ENCODE measurements at regions of chr17 and their contacts with region 1.

Region 1: DNA sequence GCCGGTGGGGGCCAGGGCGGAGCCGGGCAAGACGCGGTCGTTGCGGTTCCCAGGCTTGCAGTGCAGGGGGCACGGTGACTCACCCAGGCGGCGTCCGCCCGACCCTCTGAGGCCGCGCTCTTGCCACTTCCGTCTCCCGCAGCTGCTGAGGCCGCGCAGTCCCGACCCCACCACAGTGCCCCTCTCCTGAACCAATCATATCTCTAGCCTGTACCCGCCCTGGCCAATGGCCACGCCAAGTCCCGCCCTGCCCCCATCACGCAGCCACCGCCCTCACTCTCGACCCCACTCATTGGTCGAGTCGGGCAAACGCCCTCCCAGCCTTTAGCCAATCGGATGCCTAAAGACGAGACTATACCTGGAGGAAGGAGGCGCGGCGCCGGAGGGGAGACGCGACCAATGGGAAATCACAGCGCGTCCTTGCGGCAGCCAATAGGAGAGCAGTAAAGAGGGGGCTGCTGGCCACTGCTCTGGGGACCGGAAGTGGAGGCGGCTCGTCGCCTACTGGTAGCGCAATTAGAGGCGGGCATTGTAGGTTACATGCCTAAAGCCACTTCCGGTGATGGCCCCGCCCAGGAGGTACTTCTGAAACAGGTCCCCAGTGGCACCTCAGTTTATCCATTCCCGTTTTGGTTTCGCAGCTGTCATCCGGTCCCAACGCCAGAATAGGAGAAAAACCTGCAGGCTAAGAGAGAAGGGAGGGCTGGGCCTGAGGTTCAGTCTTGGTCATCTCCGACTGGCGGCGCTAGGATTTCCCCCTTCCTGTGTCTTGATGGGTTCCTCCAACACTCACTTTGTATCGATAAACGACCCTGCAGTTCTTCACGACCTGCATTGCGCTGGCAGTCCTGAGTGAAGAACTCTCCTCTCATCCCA is 3.5 kb upstream of the MTMR4 start:
- DNase-seq: peak; percentile 100
- ATAC-seq: peak; percentile 88
- H3K4me3 ChIP-seq: peak overlapping the region; percentile 80 to 98 (median 92)
- H3K27ac ChIP-seq: peak overlapping the region; percentile 96
- H3K4me1 ChIP-seq: peaks cover 56% of the 10 kb centered on the region
- H3K27me3 ChIP-seq: no peaks in the 10 kb centered on the region; a peak in 2 of 5 replicates
- CTCF ChIP-seq: no peak
- EP300 ChIP-seq: peak; percentile 37 to 51; a peak in 3 of 4 replicates
- POLR2A ChIP-seq: peak; percentile 86
- RAD21 ChIP-seq: no peak

Region 2: DNA sequence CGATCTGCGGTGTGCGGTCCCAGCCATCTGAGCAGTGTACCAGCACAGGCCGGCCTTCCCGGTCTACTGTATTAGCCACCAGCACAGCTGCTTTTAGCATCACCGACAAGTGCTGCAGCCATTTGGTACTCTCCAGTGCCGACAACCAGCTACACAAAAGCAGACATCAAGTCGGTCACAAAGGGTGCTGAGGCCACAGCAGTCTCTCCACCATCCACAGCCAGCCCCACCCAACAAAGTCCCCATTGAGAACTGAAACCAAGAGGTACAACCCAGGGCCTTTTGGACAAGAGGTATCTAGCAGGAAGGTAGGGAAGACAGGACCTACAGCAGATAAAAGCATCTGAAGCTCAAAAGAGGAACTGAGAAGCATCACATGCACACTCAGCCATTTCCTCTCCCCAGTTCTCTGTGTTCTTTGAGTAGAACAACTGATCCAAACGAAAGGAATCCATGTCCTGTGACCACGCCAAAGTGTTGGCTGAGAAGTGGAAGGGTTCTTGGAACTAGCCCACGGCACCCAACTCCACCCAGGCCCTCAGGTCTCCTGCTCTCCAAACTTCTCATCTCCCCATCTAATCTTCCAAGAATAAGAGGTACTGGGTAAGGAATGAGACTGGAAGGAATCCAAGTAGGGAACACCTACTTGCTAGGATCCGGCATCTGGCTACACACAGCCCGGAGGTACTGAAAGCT is 13.0 kb before region 1 on chr17:
- CTCF ChIA-PET with region 1: interaction called, 3 read pairs
- POLR2A ChIA-PET with region 1: interaction called, 13 read pairs
- in situ Hi-C with region 1: no loop called
- intact Hi-C with region 1: no loop called
- DNase-seq: no peak
- ATAC-seq: no peak; the same call in 2 of the 3 replicates
- H3K4me3 ChIP-seq: no peak overlapping the region
- H3K27ac ChIP-seq: no peak overlapping the region
- H3K4me1 ChIP-seq: peaks cover 24% of the 10 kb centered on the region
- H3K27me3 ChIP-seq: no peaks in the 10 kb centered on the region
- CTCF ChIP-seq: no peak
- EP300 ChIP-seq: no peak
- POLR2A ChIP-seq: no peak
- RAD21 ChIP-seq: no peak

Region 3: DNA sequence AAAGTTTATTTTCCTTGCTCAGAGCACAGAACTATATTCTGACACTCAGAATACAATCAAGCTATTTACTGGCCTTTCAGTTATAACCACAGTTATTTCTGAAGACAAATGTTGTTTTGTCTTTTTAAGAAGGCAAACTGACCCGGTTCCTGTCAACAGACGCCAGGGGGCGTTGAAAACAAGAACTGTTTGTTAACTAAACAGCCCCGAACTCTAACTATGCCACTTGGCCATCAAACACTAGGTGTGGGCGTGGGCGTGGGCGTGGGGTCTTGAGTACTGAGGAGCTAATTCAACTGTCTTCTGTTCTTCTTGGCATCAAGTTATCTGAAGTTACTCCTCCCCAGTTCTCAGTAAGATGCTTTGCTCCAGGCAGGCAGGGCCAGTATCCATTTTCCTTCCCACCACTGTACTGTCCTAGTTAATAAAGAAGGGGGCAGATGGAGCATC is 59.7 kb after region 1 on chr17:
- CTCF ChIA-PET with region 1: interaction called, 3 read pairs
- POLR2A ChIA-PET with region 1: interaction called, 4 read pairs
- in situ Hi-C with region 1: no loop called
- intact Hi-C with region 1: loop called (anchors 2 kb)
- DNase-seq: peak; percentile 52
- ATAC-seq: peak; percentile 35; the same call in 2 of the 3 replicates
- H3K4me3 ChIP-seq: no peak overlapping the region
- H3K27ac ChIP-seq: no peak overlapping the region
- H3K4me1 ChIP-seq: peaks cover 39% of the 10 kb centered on the region
- H3K27me3 ChIP-seq: no peaks in the 10 kb centered on the region
- CTCF ChIP-seq: peak; percentile 60
- EP300 ChIP-seq: 0 out of 4 replicates have a peak, but pooled peaks of 1 of the 2 experiments have one; percentile 21
- POLR2A ChIP-seq: no peak
- RAD21 ChIP-seq: no peak

Region 4: GRCh38 chr17:58692239-58693055 is 174.5 kb after region 1 on chr17 and contains the start of gene RAD51C:
- CTCF ChIA-PET with region 1: no interaction called
- POLR2A ChIA-PET with region 1: interaction called, 5 read pairs
- in situ Hi-C with region 1: no loop called
- intact Hi-C with region 1: loop called (anchors 5 kb)
- DNase-seq: peak; percentile 84
- ATAC-seq: peak; percentile 99
- H3K4me3 ChIP-seq: peak within 1 kb of the TSS; percentile 63 to 85 (median 69)
- H3K27ac ChIP-seq: peak within 1 kb of the TSS; percentile 77
- H3K4me1 ChIP-seq: peaks cover 26% of the 10 kb centered on the region
- H3K27me3 ChIP-seq: peaks cover 0 to under 1% of the 10 kb centered on the region in 2 experiments; a peak in 1 of 5 replicates
- CTCF ChIP-seq: no peak; the same call in 1 of the 2 replicates
- EP300 ChIP-seq: no peak
- POLR2A ChIP-seq: peak; percentile 86 to 90; a peak in 3 of 4 replicates
- RAD21 ChIP-seq: peak; percentile 49
- total RNA-seq, gene RAD51C: 106 and 151 TPM in 2 replicates

Region 5: DNA sequence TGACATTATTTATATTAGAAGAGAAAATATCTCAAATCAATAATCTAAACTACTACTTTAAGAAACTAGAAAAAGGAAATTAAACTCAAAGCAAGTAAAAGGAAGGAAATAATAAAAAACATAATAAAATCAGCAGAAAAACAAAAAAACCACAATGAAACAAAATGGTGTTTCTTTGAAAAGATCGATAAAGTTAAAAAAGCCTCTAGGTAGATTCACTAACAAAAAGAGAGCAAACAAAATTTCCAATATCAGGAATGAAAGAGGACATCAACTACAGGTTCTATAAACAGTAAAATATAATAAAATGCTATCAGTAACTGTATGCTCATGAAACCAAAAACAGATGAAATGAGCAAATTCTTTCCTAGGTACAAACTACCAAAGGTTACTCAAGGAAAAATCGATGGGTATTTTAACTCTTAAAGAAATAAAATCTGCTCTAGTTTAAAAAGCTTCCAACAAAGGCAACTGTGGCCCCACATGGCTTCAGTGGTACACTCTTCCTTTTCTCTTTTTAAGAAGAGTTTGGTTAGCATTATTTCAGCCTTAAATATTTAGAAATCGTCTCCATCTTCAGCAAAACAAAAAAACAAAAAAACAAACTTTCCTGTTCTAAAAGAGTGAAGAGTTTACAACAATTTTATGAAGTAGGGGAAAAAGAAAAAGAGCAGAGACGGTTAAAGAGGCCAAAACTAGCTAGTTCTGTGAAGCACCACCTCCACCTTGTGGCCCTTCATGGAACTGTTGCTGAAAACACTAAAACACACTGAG is 486.6 kb after region 1 on chr17:
- CTCF ChIA-PET with region 1: interaction called, 12 read pairs
- POLR2A ChIA-PET with region 1: interaction called, 7 read pairs
- in situ Hi-C with region 1: loop called (anchors 5 kb)
- intact Hi-C with region 1: loop called (anchors 1 kb)
- DNase-seq: peak; percentile 58
- ATAC-seq: peak; percentile 82
- H3K4me3 ChIP-seq: no peak overlapping the region
- H3K27ac ChIP-seq: no peak overlapping the region
- H3K4me1 ChIP-seq: no peaks in the 10 kb centered on the region
- H3K27me3 ChIP-seq: no peaks in the 10 kb centered on the region
- CTCF ChIP-seq: peak; percentile 91
- EP300 ChIP-seq: no peak
- POLR2A ChIP-seq: no peak
- RAD21 ChIP-seq: peak; percentile 83

Measured in HepG2 (cell line).